Activated CD4-positive, alpha-beta T cell treated with anti-CD3 and anti-CD28 coated beads, Interleukin-2, amount 10 ng/mL, durations not matched to agents 24 days and 14 days (primary cell): ENCODE measurements at regions of chr4 and their contacts with region 1.

Region 1: GRCh38 chr4:53037892-53038291 is 175.8 kb downstream of the RASL11B start:
- DNase-seq: no peak
- H3K4me3 Mint-ChIP-seq: no peak overlapping the region
- H3K27ac Mint-ChIP-seq: no peak overlapping the region
- H3K4me1 Mint-ChIP-seq: peaks cover 13% of the 10 kb centered on the region
- H3K27me3 Mint-ChIP-seq: no peaks in the 10 kb centered on the region

Region 2: DNA sequence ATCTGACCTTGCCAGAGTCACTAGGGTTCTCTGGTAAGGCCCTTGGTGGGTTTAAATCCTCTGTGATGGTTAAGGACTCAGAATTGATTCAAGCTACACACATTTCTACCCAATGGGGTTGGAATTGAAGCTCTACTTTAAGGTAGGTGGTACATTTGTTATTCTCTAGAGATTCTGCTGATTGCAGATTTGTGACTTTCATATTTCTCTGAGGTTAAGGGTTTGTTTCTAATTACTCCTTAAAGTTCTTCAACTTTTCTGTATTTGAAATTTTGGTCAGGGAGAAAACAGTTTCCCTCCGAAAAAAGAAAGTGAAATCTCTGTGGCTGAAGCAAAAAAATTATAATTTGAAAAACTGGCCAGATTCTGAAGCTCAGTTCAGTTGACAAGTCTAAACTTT is 353.0 kb before region 1 on chr4:
- intact Hi-C with region 1: no loop called
- DNase-seq: no peak
- H3K4me3 Mint-ChIP-seq: no peak overlapping the region
- H3K27ac Mint-ChIP-seq: no peak overlapping the region
- H3K4me1 Mint-ChIP-seq: no peaks in the 10 kb centered on the region
- H3K27me3 Mint-ChIP-seq: peaks cover 5% of the 10 kb centered on the region

Region 3: DNA sequence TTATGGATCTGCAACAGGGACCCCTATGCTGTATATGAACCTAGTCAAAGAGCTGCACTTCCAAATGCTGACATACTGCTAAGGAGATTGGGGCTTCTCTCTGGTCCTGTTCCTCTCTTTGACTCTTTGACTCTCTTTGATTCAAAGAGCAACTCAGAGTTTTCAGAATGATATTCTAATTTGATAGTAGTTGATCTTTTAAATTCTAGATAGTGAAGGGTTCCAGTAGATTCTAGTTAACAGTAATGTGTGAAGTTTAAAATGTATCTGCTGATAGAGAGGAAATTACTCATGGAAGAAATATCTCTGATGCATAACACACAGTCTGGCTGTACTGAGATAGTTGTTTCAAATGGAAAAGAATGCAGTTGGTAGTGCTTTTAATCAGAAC is 63.3 kb after region 1 on chr4:
- intact Hi-C with region 1: loop called (anchors 1 kb)
- DNase-seq: no peak
- H3K4me3 Mint-ChIP-seq: no peak overlapping the region
- H3K27ac Mint-ChIP-seq: peak overlapping the region; percentile 70
- H3K4me1 Mint-ChIP-seq: peaks cover 11% of the 10 kb centered on the region
- H3K27me3 Mint-ChIP-seq: no peaks in the 10 kb centered on the region

Region 4: DNA sequence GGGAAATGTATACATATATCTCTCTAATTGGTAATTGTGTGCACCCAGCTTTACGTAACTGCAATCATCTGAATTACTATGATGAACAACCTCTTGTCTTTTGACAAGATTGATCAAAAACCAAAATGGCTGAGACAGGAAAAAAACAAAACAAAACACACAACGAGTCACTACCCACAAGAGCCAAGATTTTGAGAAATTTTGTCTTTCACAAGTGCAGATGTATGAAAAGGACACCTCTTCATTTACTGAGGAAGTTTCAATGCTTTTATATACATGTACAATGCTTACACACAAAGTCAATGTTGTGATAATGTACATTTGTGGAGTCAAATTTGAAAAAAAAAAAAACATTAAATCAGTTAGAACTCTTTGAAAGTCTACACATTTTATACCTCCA is 103.4 kb after region 1 on chr4:
- intact Hi-C with region 1: loop called (anchors 1 kb)
- DNase-seq: no peak
- H3K4me3 Mint-ChIP-seq: no peak overlapping the region
- H3K27ac Mint-ChIP-seq: peak overlapping the region; percentile 68
- H3K4me1 Mint-ChIP-seq: peaks cover 19% of the 10 kb centered on the region
- H3K27me3 Mint-ChIP-seq: no peaks in the 10 kb centered on the region

Region 5: DNA sequence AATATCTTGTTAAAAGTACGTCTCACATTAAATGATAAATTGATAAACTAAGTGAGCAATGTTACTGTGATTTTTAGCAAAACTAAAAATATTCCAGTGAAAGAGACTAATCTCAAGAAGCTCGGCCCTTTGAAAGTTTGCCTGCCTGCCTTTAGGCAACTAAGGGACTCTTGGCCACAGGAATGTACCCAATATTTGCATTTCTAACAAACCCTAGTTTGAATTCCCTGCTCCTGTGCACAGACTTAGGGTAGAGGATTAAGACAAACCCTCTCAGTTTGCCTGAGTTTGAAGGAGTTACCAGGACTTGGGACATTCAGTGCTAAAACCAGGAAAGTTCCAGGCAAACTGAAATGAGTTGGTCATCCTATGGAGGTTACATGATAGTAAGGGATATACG is 170.9 kb after region 1 on chr4:
- intact Hi-C with region 1: no loop called
- DNase-seq: no peak
- H3K4me3 Mint-ChIP-seq: no peak overlapping the region
- H3K27ac Mint-ChIP-seq: no peak overlapping the region
- H3K4me1 Mint-ChIP-seq: peaks cover 3% of the 10 kb centered on the region
- H3K27me3 Mint-ChIP-seq: no peaks in the 10 kb centered on the region